ENCODE measurements at regions of chr18 and their contacts with region 1.

Region 1: DNA sequence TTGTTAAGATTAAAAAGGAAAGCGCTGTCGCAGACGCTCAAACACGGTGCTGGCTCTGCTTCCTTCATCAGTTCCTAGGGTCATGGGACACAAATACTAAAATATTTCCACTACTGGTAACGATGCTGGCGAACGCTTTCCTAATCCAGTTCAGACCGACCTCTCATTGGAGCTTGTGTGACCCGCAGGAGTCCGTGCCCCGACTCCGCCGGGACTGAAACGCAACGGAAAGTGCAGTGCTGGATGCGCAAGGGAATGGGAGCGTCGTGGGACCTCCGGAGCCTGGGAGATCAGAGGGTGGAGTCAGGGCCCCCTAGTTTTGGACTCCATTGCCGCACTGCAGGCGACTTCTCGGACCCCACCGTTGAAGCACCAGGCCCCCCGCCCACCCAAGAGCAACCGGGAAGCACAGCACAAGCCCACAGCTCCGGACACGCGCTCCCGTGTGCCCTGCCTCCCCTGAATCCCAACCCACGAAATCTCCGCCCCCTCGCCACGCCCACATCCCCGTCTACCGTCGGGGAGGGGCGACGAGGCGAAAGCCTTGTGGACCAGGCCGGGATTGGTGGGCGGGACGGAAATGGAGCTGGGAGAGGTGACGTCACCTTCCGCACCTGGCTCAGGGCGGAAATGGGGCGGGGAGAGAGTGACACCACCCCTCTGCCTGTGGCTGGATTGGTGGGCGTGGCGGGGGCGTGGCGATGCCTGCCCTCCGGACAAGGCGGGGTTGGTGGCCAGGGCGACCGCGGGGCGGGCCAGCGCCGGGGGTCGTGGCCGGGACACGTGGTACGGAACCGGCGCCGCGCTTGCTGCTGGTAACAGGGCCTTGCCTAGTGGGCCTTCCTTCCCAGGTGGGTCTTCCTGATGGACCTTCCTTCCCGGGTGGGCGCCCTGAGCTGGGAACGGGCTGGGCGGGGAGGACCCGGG is at the start of gene CNDP2:
- DNase-seq: peak; percentile 100
- ATAC-seq: peak; percentile 96 to 97 (median 96)
- H3K4me3 ChIP-seq: peak within 1 kb of the TSS; percentile 64 to 99 (median 90)
- H3K27ac ChIP-seq: peak within 1 kb of the TSS; percentile 79 to 97 (median 94)
- H3K4me1 ChIP-seq: peaks cover 0 to 42% (median 25%) of the 10 kb centered on the region in 12 donors
- H3K27me3 ChIP-seq: no peaks in the 10 kb centered on the region
- CTCF ChIP-seq: no peak
- POLR2A ChIP-seq: peak in 1 of 2 donors; percentile 81
- total RNA-seq, gene CNDP2: 38.3 to 162 (median 76.3) TPM

Region 2: GRCh38 chr18:74139888-74140287 is 356.0 kb before region 1 on chr18:
- intact Hi-C with region 1: no loop called
- DNase-seq: no peak
- ATAC-seq: no peak
- H3K4me3 ChIP-seq: no peak overlapping the region
- H3K27ac ChIP-seq: no peak overlapping the region
- H3K4me1 ChIP-seq: no peaks in the 10 kb centered on the region
- H3K27me3 ChIP-seq: peaks cover 0 to 3% (median 0%) of the 10 kb centered on the region in 9 donors
- CTCF ChIP-seq: no peak
- POLR2A ChIP-seq: no peak

Region 3: GRCh38 chr18:74353169-74353775 is 142.6 kb before region 1 on chr18:
- intact Hi-C with region 1: loop called (anchors 1 to 5 kb)
- DNase-seq: peak in 4 of 5 donors; percentile 63 to 73 (median 68)
- ATAC-seq: peak; percentile 84 to 96 (median 92)
- H3K4me3 ChIP-seq: no peak overlapping the region
- H3K27ac ChIP-seq: no peak overlapping the region
- H3K4me1 ChIP-seq: peaks cover 0 to 9% (median 1%) of the 10 kb centered on the region in 12 donors
- H3K27me3 ChIP-seq: no peaks in the 10 kb centered on the region
- CTCF ChIP-seq: peak; percentile 52 to 88 (median 82)
- POLR2A ChIP-seq: no peak

Region 4: GRCh38 chr18:74459889-74460288 is 36.0 kb before region 1 on chr18:
- intact Hi-C with region 1: loop called in 2 of 10 experiments (anchors 2 to 5 kb)
- DNase-seq: peak in 2 of 5 donors; percentile 25 to 57
- ATAC-seq: peak in 2 of 4 donors; percentile 8 to 25
- H3K4me3 ChIP-seq: no peak overlapping the region
- H3K27ac ChIP-seq: peak overlapping the region in 7 of 12 donors; percentile 9 to 91 (median 38)
- H3K4me1 ChIP-seq: peaks cover 0 to 40% (median 15%) of the 10 kb centered on the region in 12 donors
- H3K27me3 ChIP-seq: peaks cover 0 to 31% (median under 1%) of the 10 kb centered on the region in 9 donors
- CTCF ChIP-seq: peak in 9 of 12 donors; percentile 18 to 49 (median 32)
- POLR2A ChIP-seq: no peak

Region 5: GRCh38 chr18:74551936-74552555 is 56.2 kb after region 1 on chr18:
- intact Hi-C with region 1: loop called in 7 of 10 experiments (anchors 2 to 5 kb)
- DNase-seq: peak; percentile 79 to 88 (median 84)
- ATAC-seq: peak; percentile 77 to 98 (median 92)
- H3K4me3 ChIP-seq: no peak overlapping the region
- H3K27ac ChIP-seq: no peak overlapping the region
- H3K4me1 ChIP-seq: peaks cover 0 to 17% (median 8%) of the 10 kb centered on the region in 12 donors
- H3K27me3 ChIP-seq: no peaks in the 10 kb centered on the region
- CTCF ChIP-seq: peak; percentile 74 to 94 (median 84)
- POLR2A ChIP-seq: no peak